CD4-positive, alpha-beta memory T cell (primary cell): ENCODE measurements at regions of chr14 and their contacts with region 1.

Region 1: GRCh38 chr14:39174560-39175444 is at the start of gene PNN:
- DNase-seq: peak; percentile 97 to 100 (median 99)
- H3K4me3 ChIP-seq: peak within 1 kb of the TSS; percentile 77 to 92
- H3K4me3 Mint-ChIP-seq: peak within 1 kb of the TSS; percentile 95 to 99 (median 97)
- H3K27ac ChIP-seq: peak within 1 kb of the TSS; percentile 98
- H3K27ac Mint-ChIP-seq: peak within 1 kb of the TSS; percentile 97 to 100 (median 98)
- H3K4me1 ChIP-seq: peaks cover 28% of the 10 kb centered on the region
- H3K4me1 Mint-ChIP-seq: peaks cover 18 to 54% (median 40%) of the 10 kb centered on the region in 4 donors
- H3K27me3 ChIP-seq: no peaks in the 10 kb centered on the region
- H3K27me3 Mint-ChIP-seq: no peaks in the 10 kb centered on the region
- total RNA-seq, gene PNN: 86.0 to 93.8 TPM

Region 2: DNA sequence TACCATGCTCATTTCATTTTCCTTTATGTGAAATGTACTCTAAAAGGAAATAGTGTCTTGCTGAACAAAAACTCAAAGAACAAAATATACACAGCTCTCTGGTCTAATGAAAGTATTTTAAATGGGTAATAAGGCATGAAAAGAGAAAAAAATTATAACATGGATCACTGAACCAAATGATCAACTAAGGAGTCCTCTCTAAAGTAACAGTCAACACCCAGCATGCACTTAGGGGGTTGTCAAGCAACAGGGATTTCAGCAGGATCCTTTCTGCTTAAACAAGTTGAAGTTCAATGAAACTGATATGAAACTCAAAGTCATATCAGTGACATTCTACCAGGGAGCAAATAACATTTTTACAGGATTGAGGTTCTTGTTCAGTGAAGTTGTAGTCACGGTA is 470.6 kb before region 1 on chr14:
- CTCF ChIA-PET with region 1: no interaction called
- POLR2A ChIA-PET with region 1: no interaction called
- intact Hi-C with region 1: no loop called
- DNase-seq: no peak
- H3K4me3 ChIP-seq: no peak overlapping the region
- H3K4me3 Mint-ChIP-seq: no peak overlapping the region
- H3K27ac ChIP-seq: no peak overlapping the region
- H3K27ac Mint-ChIP-seq: no peak overlapping the region
- H3K4me1 ChIP-seq: no peaks in the 10 kb centered on the region
- H3K4me1 Mint-ChIP-seq: peaks cover 0 to 1% (median 0%) of the 10 kb centered on the region in 4 donors
- H3K27me3 ChIP-seq: no peaks in the 10 kb centered on the region
- H3K27me3 Mint-ChIP-seq: peaks cover 0 to 1% of the 10 kb centered on the region in 2 donors

Region 3: DNA sequence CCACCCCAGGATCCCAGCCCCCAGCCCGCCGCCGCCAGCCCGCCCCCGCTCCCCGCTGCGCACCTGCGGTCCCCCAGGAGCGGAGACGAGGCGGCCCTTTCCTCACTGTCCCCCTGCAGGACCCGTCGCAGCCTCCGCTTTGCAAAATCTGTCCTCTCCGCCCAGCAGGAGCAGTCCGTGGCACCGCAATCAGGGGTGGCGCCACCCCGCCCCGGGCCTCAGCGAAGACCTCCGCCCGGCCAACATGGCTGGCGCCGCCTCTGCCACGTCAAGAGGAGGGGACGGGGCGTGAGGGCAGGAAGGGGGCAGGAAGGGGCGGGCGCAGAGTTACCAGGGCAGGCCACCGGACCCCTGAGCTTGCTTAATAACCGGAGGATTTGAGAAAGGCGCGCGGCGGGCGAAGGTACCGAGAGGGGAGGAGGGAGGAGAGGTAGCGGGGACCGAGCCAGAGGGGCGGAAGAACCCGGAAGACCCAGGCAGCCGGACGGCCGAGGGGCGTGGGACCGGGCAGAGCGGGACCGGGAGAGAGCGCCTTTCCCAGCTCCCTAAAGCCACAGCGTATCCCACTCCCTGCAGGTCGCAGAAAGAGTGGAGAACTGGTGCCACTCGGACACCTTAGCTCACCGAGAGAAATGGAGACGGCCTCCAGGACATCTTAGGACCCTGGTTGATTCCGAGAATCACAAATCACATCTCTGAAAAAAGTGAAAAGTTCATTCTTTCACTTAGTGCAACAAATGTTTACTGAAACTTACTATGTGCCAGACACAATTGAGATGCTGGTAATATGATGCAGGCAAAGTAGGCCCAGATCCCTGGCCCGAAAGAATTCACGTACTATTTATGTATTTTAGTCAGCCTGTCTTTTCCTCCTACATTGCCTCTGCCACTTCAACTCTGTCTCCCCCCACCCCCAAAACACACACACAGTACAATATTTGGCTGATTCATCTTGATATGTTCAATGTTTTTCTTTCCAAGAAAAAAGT is 71.5 kb before region 1 on chr14 and contains the start of gene SEC23A:
- CTCF ChIA-PET with region 1: interaction called, 3 read pairs
- POLR2A ChIA-PET with region 1: interaction called, 26 read pairs
- intact Hi-C with region 1: loop called (anchors 1 kb)
- DNase-seq: peak; percentile 80 to 88 (median 82)
- H3K4me3 ChIP-seq: peak within 1 kb of the TSS; percentile 77 to 89
- H3K4me3 Mint-ChIP-seq: peak within 1 kb of the TSS; percentile 93 to 98 (median 96)
- H3K27ac ChIP-seq: peak within 1 kb of the TSS; percentile 86
- H3K27ac Mint-ChIP-seq: peak within 1 kb of the TSS; percentile 91 to 99 (median 98)
- H3K4me1 ChIP-seq: peaks cover 50% of the 10 kb centered on the region
- H3K4me1 Mint-ChIP-seq: peaks cover 21 to 64% (median 40%) of the 10 kb centered on the region in 4 donors
- H3K27me3 ChIP-seq: no peaks in the 10 kb centered on the region
- H3K27me3 Mint-ChIP-seq: no peaks in the 10 kb centered on the region
- total RNA-seq, gene SEC23A: 61.1 to 70.3 TPM

Region 4: GRCh38 chr14:39114073-39114838 is 60.5 kb before region 1 on chr14 and contains the start of gene GEMIN2:
- CTCF ChIA-PET with region 1: interaction called, 7 read pairs
- POLR2A ChIA-PET with region 1: interaction called, 38 read pairs
- intact Hi-C with region 1: loop called (anchors 1 kb)
- DNase-seq: peak; percentile 92 to 95 (median 94)
- H3K4me3 ChIP-seq: peak within 1 kb of the TSS; percentile 66 to 81
- H3K4me3 Mint-ChIP-seq: peak within 1 kb of the TSS; percentile 92 to 99 (median 97)
- H3K27ac ChIP-seq: peak within 1 kb of the TSS; percentile 80
- H3K27ac Mint-ChIP-seq: peak within 1 kb of the TSS; percentile 93 to 99 (median 97)
- H3K4me1 ChIP-seq: peaks cover 13% of the 10 kb centered on the region
- H3K4me1 Mint-ChIP-seq: peaks cover 12 to 25% (median 17%) of the 10 kb centered on the region in 4 donors
- H3K27me3 ChIP-seq: no peaks in the 10 kb centered on the region
- H3K27me3 Mint-ChIP-seq: peaks cover 2 to 6% of the 10 kb centered on the region in 2 donors
- total RNA-seq, gene GEMIN2: 13.4 to 16.9 TPM

Region 5: DNA sequence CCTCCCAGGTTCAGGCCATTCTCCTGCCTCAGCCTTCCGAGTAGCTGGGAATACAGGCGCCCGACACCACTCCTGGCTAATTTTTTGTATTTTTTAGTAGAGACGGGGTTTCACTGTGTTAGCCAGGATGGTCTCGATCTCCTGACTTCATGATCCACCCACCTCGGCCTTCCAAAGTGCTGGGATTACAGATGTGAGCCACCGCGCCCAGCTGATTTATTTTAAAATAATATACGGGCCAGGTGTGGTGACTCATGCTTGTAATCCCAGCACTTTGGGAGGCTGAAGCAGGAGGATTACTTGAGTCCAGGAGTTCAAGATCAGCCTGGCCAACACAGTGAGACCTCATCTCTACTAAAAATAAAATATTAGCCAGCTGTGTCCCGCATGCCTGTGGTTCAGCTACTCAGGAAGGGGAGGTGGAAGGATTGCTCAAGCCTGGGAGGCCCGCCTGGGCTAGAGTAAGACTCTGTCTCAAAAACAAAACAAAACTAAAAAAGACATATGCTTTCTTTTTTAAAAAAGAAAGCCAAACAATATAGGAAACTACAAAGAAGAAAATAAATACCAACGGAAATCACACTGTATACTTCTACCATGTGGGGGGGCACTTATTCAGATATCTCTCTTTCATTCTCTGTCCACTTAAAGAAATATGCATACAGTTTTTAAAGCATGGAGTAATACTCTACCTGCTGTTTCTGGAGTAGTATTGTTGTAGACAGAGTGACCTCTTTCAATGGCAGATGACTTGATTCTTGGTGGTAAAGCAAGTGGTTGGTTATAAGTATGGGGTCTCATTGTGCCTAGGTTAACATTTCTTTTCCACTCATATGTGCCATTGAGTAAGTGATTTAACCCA is 58.0 kb after region 1 on chr14:
- CTCF ChIA-PET with region 1: interaction called, 3 read pairs
- POLR2A ChIA-PET with region 1: interaction called, 17 read pairs
- intact Hi-C with region 1: loop called (anchors 1 kb)
- DNase-seq: peak in 2 of 5 donors; percentile 4 to 10
- H3K4me3 ChIP-seq: no peak overlapping the region
- H3K4me3 Mint-ChIP-seq: peak overlapping the region in 3 of 8 donors; percentile 40 to 60 (median 43)
- H3K27ac ChIP-seq: no peak overlapping the region
- H3K27ac Mint-ChIP-seq: peak overlapping the region in 5 of 7 donors; percentile 28 to 75 (median 63)
- H3K4me1 ChIP-seq: peaks cover 35% of the 10 kb centered on the region
- H3K4me1 Mint-ChIP-seq: peaks cover 24 to 37% (median 31%) of the 10 kb centered on the region in 4 donors
- H3K27me3 ChIP-seq: no peaks in the 10 kb centered on the region
- H3K27me3 Mint-ChIP-seq: no peaks in the 10 kb centered on the region